SK-MEL-5 (cell line): ENCODE measurements at regions of chr6 and their contacts with region 1.

Region 1: GRCh38 chr6:146913842-146914488 is 290.3 kb upstream of the STXBP5 start:
- DNase-seq: peak; percentile 93

Region 2: GRCh38 chr6:147202516-147203312 is 288.7 kb after region 1 on chr6:
- in situ Hi-C with region 1: loop called (anchors 25 kb)
- DNase-seq: peak; percentile 96